Heart left ventricle (tissue), 16 donors: ENCODE measurements at regions of chr5 and their contacts with region 1.

Region 1: DNA sequence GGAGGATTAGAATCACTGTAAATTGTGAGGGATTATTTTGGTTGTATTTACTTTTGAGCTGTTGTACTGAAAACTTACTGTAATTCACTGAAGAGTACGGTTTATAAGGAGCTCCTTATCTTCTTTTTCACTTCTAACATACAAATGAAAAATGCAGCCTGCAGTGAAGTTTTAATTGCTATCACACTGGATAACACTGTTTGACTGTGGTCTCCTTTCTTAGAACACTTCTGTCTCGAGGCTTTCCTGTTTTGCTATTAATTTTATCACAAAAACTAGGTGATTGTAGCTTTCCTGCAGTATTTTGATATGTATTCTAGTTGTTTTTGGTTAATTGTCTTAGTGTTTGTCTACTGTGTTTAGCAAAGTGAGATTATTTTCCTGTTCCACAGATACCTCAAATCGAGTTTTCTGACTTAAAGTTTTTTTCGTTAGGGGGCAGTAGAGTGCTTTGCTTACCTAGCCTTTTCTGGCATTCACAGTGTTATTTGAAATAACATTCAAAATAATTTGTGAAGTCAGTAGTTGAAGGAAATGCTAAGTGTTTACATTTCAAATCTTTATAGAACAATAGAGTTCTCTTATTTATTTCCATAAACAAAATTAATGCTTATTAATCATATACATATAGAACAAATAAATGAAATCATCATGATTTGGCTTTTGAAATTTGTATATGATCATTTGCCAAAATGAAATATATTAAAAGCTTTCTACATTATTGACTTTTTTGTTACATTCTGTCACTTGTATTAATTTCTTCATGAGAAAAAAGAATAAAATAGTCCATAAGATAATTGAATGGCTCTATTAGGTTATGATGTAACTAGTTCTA is 52.9 kb downstream of the COMMD10 start:
- DNase-seq: no peak
- ATAC-seq: peak in 2 of 4 donors; percentile 34 to 46
- H3K4me3 ChIP-seq: no peak overlapping the region
- H3K27ac ChIP-seq: no peak overlapping the region
- H3K4me1 ChIP-seq: peaks cover 0 to 15% (median 1%) of the 10 kb centered on the region in 12 donors
- H3K27me3 ChIP-seq: no peaks in the 10 kb centered on the region
- CTCF ChIP-seq: peak; percentile 71 to 89 (median 79)
- POLR2A ChIP-seq: no peak

Region 2: DNA sequence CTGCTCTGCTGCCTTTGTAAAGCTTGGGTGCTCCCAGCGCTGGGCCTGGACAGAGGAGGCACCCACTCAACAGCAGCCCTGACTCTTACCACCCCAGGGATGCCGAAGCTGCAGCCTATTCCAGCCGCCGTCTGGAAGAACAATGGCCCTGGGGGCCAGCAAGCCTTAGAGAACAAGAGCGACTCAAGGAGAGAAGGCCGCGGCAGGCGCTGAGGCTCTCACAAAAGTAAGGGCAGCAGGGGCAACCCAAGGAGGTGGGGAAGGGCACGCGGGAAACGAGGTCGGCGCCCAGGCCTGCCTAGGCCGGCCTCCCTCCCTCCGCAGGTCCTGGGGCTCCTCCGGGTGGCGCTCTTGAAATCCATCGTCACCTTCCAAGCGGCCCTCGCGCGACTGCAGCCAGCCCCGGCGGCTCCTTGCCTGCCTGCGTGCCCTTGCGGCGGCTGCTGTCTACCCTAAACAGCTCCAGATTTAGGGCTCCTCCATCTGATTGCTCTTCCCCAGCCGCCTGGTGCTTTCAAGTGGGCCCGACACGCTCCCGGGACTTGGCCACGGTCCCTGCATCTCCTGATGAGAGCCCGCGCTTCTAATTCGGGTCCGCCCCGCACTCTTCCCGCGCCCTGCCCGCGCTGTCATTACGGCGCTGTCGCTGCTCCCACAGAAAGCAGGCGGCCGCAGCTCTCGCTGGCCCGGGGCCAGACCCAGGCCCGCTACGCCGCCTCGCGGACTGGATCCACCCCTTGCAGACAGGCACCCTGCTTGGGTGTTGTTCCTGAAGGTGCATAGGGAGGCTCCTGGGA is 223.6 kb after region 1 on chr5:
- intact Hi-C with region 1: loop called in 3 of 10 experiments (anchors 10 kb)
- DNase-seq: peak; percentile 51 to 81 (median 70)
- ATAC-seq: peak; percentile 26 to 77 (median 73)
- H3K4me3 ChIP-seq: peak overlapping the region; percentile 6 to 60 (median 48)
- H3K27ac ChIP-seq: peak overlapping the region in 10 of 12 donors; percentile 41 to 82 (median 67)
- H3K4me1 ChIP-seq: peaks cover 0 to 43% (median 32%) of the 10 kb centered on the region in 12 donors
- H3K27me3 ChIP-seq: no peaks in the 10 kb centered on the region
- CTCF ChIP-seq: peak in 11 of 12 donors; percentile 7 to 59 (median 39)
- POLR2A ChIP-seq: no peak

Region 3: DNA sequence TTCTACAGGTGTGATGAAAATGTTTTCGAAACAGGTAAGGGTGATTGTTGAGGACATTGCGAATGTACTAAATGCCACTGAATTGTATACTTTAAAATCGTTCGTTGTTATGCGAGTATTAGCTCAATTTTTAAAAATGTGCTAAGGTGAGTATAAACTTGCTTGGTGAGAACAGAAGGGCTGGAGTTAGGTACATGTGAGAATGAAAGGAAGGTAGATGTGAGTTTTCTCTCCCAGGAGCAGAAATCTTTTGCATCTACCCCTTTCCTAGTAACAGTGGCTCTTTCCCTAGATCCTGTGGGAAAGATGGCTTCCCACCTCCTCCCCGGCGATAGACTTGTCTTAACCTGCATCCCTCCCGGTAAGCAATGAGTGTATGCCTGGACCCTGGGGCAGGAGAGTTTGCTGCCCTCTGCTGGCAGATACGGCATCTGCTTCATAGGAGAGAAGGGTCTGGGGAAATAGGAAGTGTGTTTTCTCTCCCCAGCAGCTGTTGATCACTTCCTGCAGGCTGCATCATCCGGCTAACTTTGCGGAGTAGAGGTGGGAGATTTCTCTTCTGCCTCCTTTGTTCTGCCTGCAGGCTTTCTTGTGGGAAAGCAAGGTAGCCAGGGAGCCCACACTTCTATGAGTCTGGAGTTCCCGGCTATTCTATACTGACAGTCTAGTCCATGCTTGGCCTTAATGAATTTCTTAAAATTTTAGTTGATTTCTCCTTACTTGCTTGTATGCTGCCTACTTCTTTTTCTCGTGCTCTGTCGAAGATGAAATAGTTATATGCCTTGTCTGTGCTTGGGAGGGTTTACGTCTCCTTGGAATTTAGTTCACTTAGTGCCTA is 810.1 kb after region 1 on chr5:
- intact Hi-C with region 1: loop called in 5 of 10 experiments (anchors 5 to 10 kb)
- DNase-seq: peak; percentile 42 to 68 (median 62)
- ATAC-seq: peak; percentile 81 to 89 (median 88)
- H3K4me3 ChIP-seq: no peak overlapping the region
- H3K27ac ChIP-seq: no peak overlapping the region
- H3K4me1 ChIP-seq: peaks cover 0 to 6% (median 0%) of the 10 kb centered on the region in 12 donors
- H3K27me3 ChIP-seq: no peaks in the 10 kb centered on the region
- CTCF ChIP-seq: peak; percentile 54 to 82 (median 72)
- POLR2A ChIP-seq: no peak